HepG2 (cell line): ENCODE measurements at regions of chr15 and their contacts with region 1.

Region 1: GRCh38 chr15:68304589-68305337 is 27.2 kb downstream of the FEM1B start:
- DNase-seq: no peak
- ATAC-seq: peak; percentile 64
- H3K4me3 ChIP-seq: no peak overlapping the region
- H3K27ac ChIP-seq: no peak overlapping the region
- H3K4me1 ChIP-seq: peaks cover 73% of the 10 kb centered on the region
- H3K27me3 ChIP-seq: no peaks in the 10 kb centered on the region
- CTCF ChIP-seq: 0 out of 2 replicates have a peak, but pooled peaks have one; percentile 18
- EP300 ChIP-seq: no peak
- POLR2A ChIP-seq: no peak
- RAD21 ChIP-seq: no peak

Region 2: GRCh38 chr15:68252925-68253534 is 51.7 kb before region 1 on chr15:
- CTCF ChIA-PET with region 1: interaction called, 19 read pairs
- POLR2A ChIA-PET with region 1: no interaction called
- in situ Hi-C with region 1: loop called (anchors 5 kb)
- intact Hi-C with region 1: loop called (anchors 1 kb)
- DNase-seq: peak; percentile 72
- ATAC-seq: peak; percentile 61
- H3K4me3 ChIP-seq: no peak overlapping the region; a peak in 1 of 6 replicates
- H3K27ac ChIP-seq: no peak overlapping the region
- H3K4me1 ChIP-seq: peaks cover 7% of the 10 kb centered on the region
- H3K27me3 ChIP-seq: 0 out of 5 replicates have a peak, but pooled peaks cover 0 to 6% of the 10 kb centered on the region in 2 experiments
- CTCF ChIP-seq: peak; percentile 86
- EP300 ChIP-seq: no peak
- POLR2A ChIP-seq: no peak
- RAD21 ChIP-seq: peak; percentile 81

Region 3: GRCh38 chr15:68372291-68372811 is 67.6 kb after region 1 on chr15:
- CTCF ChIA-PET with region 1: interaction called, 4 read pairs
- POLR2A ChIA-PET with region 1: no interaction called
- in situ Hi-C with region 1: loop called (anchors 5 kb)
- intact Hi-C with region 1: no loop called
- DNase-seq: peak; percentile 16
- ATAC-seq: peak; percentile 95
- H3K4me3 ChIP-seq: no peak overlapping the region
- H3K27ac ChIP-seq: no peak overlapping the region
- H3K4me1 ChIP-seq: no peaks in the 10 kb centered on the region
- H3K27me3 ChIP-seq: peaks cover 1 to 6% of the 10 kb centered on the region in 2 experiments; a peak in 2 of 5 replicates
- CTCF ChIP-seq: peak; percentile 48
- EP300 ChIP-seq: no peak
- POLR2A ChIP-seq: no peak
- RAD21 ChIP-seq: no peak; the same call in 1 of the 2 replicates

Region 4: GRCh38 chr15:68383161-68384074 is 78.7 kb after region 1 on chr15:
- CTCF ChIA-PET with region 1: interaction called, 8 read pairs
- POLR2A ChIA-PET with region 1: no interaction called
- in situ Hi-C with region 1: no loop called
- intact Hi-C with region 1: loop called (anchors 1 kb)
- DNase-seq: peak; percentile 39
- ATAC-seq: 0 out of 3 replicates have a peak, but pooled peaks have one; percentile 41
- H3K4me3 ChIP-seq: no peak overlapping the region
- H3K27ac ChIP-seq: no peak overlapping the region
- H3K4me1 ChIP-seq: peaks cover 10% of the 10 kb centered on the region
- H3K27me3 ChIP-seq: peaks cover 12 to 25% of the 10 kb centered on the region in 2 experiments; a peak in 4 of 5 replicates
- CTCF ChIP-seq: peak; percentile 64
- EP300 ChIP-seq: no peak
- POLR2A ChIP-seq: no peak
- RAD21 ChIP-seq: 0 out of 2 replicates have a peak, but pooled peaks have one; percentile 16

Region 5: DNA sequence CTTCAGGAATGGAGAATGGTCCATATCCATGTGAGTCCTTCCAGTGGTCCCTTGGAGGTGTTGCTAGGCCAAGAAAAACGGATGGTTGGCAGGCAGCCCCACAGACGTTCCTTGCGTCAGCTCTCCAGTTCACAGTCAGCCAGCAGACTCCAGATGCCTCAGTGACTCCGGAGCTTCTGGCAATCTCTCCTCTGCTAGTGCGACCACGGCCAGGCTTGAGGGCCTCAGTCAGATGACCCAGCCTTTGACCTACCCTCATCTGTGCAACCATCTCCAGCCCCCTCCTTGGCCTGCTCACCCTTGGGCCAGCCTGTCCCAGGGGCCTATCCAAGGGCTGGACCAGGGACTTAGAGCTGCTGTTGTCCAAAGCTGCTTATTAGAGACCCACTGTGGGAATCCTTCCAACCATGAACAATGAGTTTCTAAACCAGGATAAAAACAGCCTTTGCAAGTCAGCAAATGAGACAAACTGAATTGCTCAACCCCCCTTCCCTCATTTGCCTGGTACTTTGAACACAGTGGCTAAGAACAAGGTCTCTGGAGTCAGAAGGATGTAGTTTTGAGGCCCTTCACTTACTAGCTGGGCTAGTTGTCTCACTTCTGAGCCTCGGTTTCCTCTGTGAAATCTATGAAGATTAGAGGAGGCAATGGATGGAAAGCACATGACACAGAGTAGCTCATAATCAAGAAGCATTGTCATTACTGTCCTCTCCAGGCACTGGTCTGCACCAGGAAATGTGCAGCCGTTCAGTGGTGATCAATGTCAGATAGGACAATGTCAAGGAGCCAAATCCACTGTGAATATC is 471.1 kb after region 1 on chr15:
- CTCF ChIA-PET with region 1: no interaction called
- POLR2A ChIA-PET with region 1: no interaction called
- in situ Hi-C with region 1: no loop called
- intact Hi-C with region 1: loop called (anchors 5 kb)
- DNase-seq: no peak
- ATAC-seq: peak; percentile 41
- H3K4me3 ChIP-seq: no peak overlapping the region
- H3K27ac ChIP-seq: no peak overlapping the region
- H3K4me1 ChIP-seq: no peaks in the 10 kb centered on the region
- H3K27me3 ChIP-seq: no peaks in the 10 kb centered on the region; a peak in 1 of 5 replicates
- CTCF ChIP-seq: no peak
- EP300 ChIP-seq: no peak
- POLR2A ChIP-seq: no peak; a peak in 1 of 4 replicates
- RAD21 ChIP-seq: no peak